ENCODE measurements at regions of chr19 and their contacts with region 1.

Region 1: GRCh38 chr19:12777217-12778016 is 2.1 kb upstream of the HOOK2 start:
- DNase-seq: peak; percentile 75
- CTCF ChIP-seq: peak; percentile 94

Region 2: DNA sequence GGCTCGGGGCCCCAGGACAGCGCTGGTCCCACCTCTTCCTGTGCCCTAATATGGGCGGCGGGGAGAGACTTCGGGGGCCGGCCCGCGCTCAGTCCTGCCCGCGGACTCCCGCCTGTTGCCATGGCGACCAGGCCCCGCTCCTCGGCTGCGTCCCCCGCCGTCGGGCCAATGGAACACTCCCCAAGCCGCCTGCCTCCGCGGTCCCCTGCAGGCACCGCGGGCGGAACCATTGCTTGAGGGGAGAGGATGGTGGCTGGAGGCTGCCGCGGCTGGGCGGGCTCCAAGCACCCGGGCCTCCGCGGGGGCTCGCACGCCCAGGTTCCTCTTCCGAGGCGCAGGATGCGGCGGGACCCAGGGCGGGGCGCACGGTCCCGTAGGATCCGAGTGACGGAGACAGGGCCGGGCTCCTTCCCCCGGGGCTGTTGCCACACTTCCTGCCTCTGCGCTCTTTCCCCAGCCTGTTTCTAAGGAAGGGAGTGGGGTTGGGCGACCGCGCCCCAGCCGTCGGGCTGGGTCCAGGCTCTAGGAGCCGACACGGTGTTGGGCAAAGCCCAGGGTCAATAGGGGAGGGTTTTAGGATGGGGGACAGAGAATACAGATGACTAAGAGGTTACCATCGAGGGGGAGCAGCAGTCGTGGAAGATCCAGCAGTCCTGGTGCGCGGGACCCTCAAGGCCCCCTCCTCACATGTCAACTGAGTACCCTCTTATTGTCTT is 12.6 kb after region 1 on chr19:
- CTCF ChIA-PET with region 1: interaction called, 399 read pairs
- POLR2A ChIA-PET with region 1: interaction called, 110 read pairs
- DNase-seq: peak; percentile 94
- CTCF ChIP-seq: no peak